Caco-2 (cell line): ENCODE measurements at regions of chr7 and their contacts with region 1.

Region 1: DNA sequence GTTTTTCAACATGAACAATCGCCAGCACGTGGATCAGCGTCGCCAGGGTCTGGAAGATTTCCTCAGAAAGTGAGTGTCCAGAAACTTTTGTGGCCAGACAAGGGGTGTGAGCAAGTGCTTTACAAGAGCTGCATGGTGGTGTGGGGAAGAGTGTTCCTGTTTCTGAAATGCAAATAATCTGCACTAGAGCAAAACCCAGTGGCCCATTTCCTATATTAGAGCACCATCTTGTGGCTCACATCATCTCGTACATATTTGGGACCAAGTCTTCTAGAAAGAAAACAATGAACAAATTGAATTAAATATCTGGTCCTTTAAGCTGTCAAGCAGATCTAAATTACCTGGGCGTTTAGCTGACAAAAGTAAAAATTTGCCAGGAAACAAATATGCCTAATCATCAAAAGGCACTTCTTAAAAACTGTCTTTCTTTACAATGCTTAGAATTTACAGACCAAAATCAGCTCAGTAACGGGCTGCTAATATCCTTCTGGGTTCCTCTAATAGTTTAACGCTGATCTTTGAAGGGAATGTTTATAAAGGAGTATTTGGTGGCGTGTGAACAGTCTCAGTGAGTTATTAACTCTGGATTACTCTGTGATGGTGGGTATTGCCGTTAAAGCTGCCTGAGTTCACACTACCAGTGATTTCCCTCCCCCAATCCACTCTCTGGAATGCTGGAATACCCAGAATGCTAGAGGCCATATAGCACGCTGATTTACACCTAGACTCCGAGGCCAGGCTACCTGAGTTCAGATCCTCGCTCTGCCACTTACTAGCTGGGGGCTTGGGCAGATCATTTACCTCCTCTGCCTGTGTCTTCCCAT is 73.6 kb downstream of the SNX10 start:
- DNase-seq: peak; percentile 55 to 70
- H3K4me3 ChIP-seq: no peak overlapping the region
- H3K4me3 Mint-ChIP-seq: peak overlapping the region; percentile 49
- H3K27ac Mint-ChIP-seq: peak overlapping the region; percentile 53
- H3K4me1 ChIP-seq: no peaks in the 10 kb centered on the region
- H3K4me1 Mint-ChIP-seq: peaks cover 10% of the 10 kb centered on the region
- H3K27me3 ChIP-seq: no peaks in the 10 kb centered on the region
- H3K27me3 Mint-ChIP-seq: no peaks in the 10 kb centered on the region
- CTCF ChIP-seq: peak; percentile 57 to 84

Region 2: DNA sequence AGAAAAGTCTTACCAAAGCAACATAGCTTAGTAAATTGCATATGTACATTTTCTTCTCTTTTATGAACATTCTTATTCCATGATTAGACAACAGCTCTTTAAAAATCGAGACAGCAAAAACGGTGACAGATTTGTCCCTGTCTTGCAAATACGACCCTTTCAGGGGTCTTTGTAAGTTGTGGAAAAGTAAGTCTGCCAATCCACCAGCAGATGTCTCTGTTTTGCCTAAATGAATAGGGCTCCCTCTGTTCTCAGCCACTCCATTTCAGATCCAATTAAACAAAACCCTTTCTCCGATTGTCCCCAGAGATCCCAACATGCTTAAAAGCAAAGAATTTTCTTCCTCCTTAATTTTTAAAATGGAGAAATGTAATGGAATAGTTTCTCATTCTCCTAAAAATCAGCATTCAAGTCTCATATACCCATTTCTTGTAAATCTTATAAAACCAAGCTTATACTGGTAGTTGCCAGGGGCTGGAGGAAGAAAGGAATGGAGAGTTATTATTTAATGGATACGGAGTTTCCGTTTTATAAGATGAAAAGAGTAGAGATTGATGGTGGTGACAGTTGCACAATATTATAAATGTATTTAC is 274.3 kb before region 1 on chr7:
- CTCF ChIA-PET with region 1: interaction called, 8 read pairs
- POLR2A ChIA-PET with region 1: no interaction called
- intact Hi-C with region 1: loop called (anchors 1 kb)
- DNase-seq: peak in 1 of 2 experiments; percentile 42
- H3K4me3 ChIP-seq: no peak overlapping the region
- H3K4me3 Mint-ChIP-seq: no peak overlapping the region
- H3K27ac Mint-ChIP-seq: no peak overlapping the region
- H3K4me1 ChIP-seq: peaks cover 24% of the 10 kb centered on the region
- H3K4me1 Mint-ChIP-seq: peaks cover 25% of the 10 kb centered on the region
- H3K27me3 ChIP-seq: no peaks in the 10 kb centered on the region
- H3K27me3 Mint-ChIP-seq: no peaks in the 10 kb centered on the region
- CTCF ChIP-seq: peak; percentile 67

Region 3: DNA sequence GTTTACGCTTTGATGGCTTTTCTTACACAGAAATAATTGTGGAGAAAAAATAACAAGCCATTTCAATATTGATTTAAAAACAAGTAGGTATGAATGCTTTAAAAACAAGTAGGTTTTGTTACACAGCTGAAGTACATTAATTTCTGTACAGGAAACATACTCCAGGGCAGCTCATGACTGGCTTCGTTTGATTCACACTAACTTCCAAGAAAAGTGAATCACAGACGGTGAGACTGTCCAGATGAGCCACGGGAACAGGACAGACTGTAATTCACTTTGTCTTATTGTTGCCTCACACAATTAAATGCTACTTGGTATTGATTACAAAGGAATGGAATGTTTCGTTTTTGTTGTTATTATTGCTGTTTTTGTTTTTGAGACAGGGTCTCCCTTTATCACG is 100.2 kb before region 1 on chr7:
- CTCF ChIA-PET with region 1: no interaction called
- POLR2A ChIA-PET with region 1: no interaction called
- intact Hi-C with region 1: no loop called
- DNase-seq: no peak
- H3K4me3 ChIP-seq: no peak overlapping the region
- H3K4me3 Mint-ChIP-seq: no peak overlapping the region
- H3K27ac Mint-ChIP-seq: no peak overlapping the region
- H3K4me1 ChIP-seq: no peaks in the 10 kb centered on the region
- H3K4me1 Mint-ChIP-seq: no peaks in the 10 kb centered on the region
- H3K27me3 ChIP-seq: no peaks in the 10 kb centered on the region
- H3K27me3 Mint-ChIP-seq: no peaks in the 10 kb centered on the region
- CTCF ChIP-seq: no peak

Region 4: DNA sequence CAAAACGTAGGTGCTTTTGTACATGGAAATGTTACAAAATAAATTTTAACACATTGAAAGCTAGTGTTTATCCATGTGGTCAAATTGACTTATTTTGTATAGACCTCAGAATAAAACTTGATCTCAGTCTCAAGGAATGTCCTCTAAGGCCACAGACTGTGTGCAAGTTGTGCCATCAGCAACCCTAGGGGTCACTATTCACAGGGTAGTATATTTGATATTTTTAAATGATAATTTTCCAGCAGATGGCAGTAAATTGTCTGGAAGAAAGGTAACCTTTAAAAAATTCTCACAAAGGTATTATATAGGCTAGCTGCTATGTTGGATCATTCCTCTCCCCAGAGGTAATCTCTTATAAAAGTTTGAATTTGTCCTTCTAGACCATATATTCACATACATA is 86.5 kb before region 1 on chr7:
- CTCF ChIA-PET with region 1: interaction called, 3 read pairs
- POLR2A ChIA-PET with region 1: no interaction called
- intact Hi-C with region 1: loop called (anchors 5 kb)
- DNase-seq: no peak
- H3K4me3 ChIP-seq: no peak overlapping the region
- H3K4me3 Mint-ChIP-seq: no peak overlapping the region
- H3K27ac Mint-ChIP-seq: no peak overlapping the region
- H3K4me1 ChIP-seq: no peaks in the 10 kb centered on the region
- H3K4me1 Mint-ChIP-seq: no peaks in the 10 kb centered on the region
- H3K27me3 ChIP-seq: no peaks in the 10 kb centered on the region
- H3K27me3 Mint-ChIP-seq: no peaks in the 10 kb centered on the region
- CTCF ChIP-seq: peak; percentile 24 to 35

Region 5: DNA sequence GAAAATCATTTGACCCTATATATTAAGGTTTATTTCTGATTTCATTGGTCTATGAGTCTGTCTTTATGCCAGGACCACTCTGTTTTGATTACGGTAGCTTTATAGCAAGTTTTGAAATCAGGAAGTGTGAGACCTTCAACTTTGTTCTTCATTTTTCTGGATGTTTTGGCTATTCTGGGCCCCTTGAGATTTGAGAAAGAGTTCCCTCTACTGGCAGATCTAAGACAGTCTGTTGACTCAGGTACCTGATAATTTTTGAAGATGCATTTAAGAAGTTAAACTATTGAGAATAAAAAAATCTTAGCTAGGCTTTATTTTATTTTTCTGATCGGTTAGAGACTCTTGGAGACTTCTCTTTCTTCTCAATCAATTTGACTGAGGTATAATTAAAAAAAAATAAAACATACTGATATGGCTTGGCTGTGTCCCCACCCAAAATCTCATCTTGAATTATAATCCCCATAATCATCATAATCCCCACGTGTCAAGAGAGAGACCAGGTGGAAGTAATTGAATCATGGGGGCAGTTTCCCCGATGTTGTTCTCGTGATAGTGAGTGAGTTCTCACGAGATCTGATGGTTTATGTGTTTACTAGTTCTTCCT is 135.6 kb after region 1 on chr7:
- CTCF ChIA-PET with region 1: interaction called, 11 read pairs
- POLR2A ChIA-PET with region 1: no interaction called
- intact Hi-C with region 1: loop called (anchors 1 kb)
- DNase-seq: peak in 1 of 2 experiments; percentile 13
- H3K4me3 ChIP-seq: no peak overlapping the region
- H3K4me3 Mint-ChIP-seq: no peak overlapping the region
- H3K27ac Mint-ChIP-seq: no peak overlapping the region
- H3K4me1 ChIP-seq: no peaks in the 10 kb centered on the region
- H3K4me1 Mint-ChIP-seq: no peaks in the 10 kb centered on the region
- H3K27me3 ChIP-seq: no peaks in the 10 kb centered on the region; the same call in 1 of the 2 replicates
- H3K27me3 Mint-ChIP-seq: peaks cover 14% of the 10 kb centered on the region
- CTCF ChIP-seq: peak; percentile 61 to 65

Region 6: GRCh38 chr7:27160546-27161213 is 795.4 kb after region 1 on chr7:
- CTCF ChIA-PET with region 1: interaction called, 51 read pairs
- POLR2A ChIA-PET with region 1: no interaction called
- intact Hi-C with region 1: no loop called
- DNase-seq: peak; percentile 84 to 93
- H3K4me3 ChIP-seq: peak overlapping the region; percentile 73
- H3K4me3 Mint-ChIP-seq: peak overlapping the region; percentile 77
- H3K27ac Mint-ChIP-seq: no peak overlapping the region
- H3K4me1 ChIP-seq: peaks cover 7% of the 10 kb centered on the region
- H3K4me1 Mint-ChIP-seq: peaks cover 14% of the 10 kb centered on the region
- H3K27me3 ChIP-seq: no peaks in the 10 kb centered on the region
- H3K27me3 Mint-ChIP-seq: no peaks in the 10 kb centered on the region
- CTCF ChIP-seq: peak; percentile 94 to 98